ENCODE measurements at regions of chrX and their contacts with region 1.

Region 1: DNA sequence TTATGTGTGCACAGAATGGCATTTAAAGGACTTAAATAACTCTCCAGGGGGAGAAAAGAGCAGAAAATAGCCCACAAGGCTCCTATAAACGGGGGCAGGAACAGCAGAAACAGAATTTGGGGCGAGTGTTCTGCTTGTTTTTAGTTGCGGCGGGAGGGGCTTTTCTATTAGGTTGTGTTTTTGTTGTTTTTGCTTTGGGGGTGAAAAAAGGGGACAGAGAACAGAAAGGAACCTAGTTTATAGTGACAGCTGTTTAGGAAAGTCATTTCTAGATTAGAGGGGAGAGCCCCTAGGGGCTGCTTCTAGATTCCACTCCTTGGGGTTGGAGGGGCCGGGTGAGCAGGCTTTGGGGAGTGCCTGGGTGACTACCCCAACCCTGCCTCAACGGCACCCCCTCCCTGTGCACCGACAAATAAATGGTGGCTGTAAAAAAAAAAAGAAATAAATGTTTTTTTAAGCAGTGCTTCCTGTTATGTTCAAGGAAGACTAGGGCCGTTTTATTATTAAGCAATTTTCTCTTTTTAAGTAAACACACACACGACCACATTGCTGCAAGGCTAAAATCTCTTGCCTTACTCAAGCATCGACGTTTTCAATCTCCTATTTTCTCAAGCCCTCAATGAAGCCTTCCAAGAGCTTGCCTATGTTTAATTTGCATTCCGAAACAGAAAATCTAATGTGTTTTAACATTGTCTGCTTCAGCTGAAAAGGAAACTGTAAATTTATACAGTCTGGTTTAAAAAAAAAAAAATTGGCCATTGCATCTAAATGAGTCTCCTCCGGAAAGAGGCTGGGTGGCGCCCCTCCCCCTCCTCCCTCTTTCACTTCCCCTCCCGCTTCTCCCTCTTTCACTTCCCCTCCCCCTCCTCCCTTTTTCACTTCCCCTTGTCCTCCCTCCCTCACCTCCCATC is 123.3 kb upstream of the TBL1X start:
- DNase-seq: peak; percentile 30
- H3K4me3 Mint-ChIP-seq: peak overlapping the region; percentile 73
- H3K27ac Mint-ChIP-seq: peak overlapping the region; percentile 90
- H3K4me1 Mint-ChIP-seq: peaks cover 36% of the 10 kb centered on the region
- H3K27me3 Mint-ChIP-seq: peaks cover 2% of the 10 kb centered on the region

Region 2: DNA sequence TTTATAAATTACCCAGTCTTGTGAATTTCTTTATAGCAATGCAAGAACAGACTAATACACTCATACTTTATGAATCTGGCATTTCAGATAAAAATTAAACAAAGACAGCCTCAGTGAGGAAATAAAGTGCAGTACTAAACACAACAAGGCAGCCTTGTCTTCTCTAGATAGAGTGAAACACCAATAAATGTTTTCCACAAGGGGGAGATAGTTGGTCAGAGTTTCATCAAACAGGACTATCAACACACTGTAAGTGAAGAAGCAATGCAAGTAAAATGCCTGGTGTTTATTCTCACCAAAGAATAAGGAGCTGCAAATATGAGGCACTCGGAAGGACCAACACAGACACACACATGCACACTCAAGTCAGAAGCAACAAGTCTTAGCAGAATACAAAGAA is 370.4 kb before region 1 on chrX:
- intact Hi-C with region 1: loop called (anchors 10 kb)
- DNase-seq: no peak
- H3K4me3 Mint-ChIP-seq: no peak overlapping the region
- H3K27ac Mint-ChIP-seq: no peak overlapping the region
- H3K4me1 Mint-ChIP-seq: peaks cover 6% of the 10 kb centered on the region
- H3K27me3 Mint-ChIP-seq: peaks cover 2% of the 10 kb centered on the region

Region 3: DNA sequence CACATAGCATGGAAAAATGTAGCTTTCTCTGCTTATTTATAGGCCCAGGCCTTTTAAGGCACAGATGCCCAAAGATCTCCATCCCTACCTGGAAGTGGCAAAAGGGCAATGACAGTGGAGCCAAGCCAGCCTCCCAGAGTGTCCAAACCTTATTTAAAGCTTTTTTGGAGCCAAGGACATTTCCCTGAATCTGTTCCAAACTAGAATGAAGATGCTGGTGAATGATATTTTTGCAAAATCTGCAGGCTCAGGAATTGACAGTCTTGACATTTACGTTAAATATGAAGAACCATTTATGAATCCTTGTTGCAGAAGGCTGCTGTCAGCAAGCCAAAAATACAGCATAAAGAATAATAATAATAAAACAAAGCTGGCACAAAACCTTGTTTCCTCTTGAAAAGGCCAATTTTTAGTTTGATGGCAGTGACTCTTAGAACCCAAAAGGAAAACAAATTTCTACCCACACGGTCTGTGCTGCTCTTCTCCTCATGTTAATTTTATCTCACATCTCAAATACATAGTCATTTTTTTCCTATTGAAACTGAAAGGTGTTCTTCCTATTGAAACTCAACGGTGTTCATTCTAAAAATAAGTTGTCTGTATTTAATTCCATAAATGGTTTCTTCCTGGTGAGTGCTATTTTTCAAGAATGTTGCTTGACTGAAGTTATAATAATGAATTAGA is 83.0 kb before region 1 on chrX:
- intact Hi-C with region 1: loop called (anchors 1 kb)
- DNase-seq: no peak
- H3K4me3 Mint-ChIP-seq: no peak overlapping the region
- H3K27ac Mint-ChIP-seq: peak overlapping the region; percentile 36
- H3K4me1 Mint-ChIP-seq: peaks cover 26% of the 10 kb centered on the region
- H3K27me3 Mint-ChIP-seq: no peaks in the 10 kb centered on the region

Region 4: DNA sequence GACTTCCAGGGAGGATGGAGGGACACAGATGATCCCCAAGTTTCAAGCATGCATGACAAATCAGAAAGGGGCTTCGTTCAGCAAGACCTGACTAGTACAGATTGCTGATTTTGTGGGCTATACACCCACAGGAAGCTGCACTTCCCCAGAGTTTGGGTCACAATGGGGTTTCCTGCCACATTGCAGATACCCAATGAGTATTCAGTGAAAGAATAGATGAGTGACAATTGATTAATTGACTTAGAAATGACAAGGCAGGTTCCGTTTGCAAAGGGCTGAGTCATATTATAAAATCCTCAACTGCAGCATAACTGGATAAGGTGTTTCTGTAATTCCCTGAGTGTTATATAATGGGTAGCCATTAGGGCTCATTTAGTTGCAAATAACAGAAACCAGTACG is 23.3 kb before region 1 on chrX:
- intact Hi-C with region 1: loop called (anchors 1 kb)
- DNase-seq: peak; percentile 3
- H3K4me3 Mint-ChIP-seq: no peak overlapping the region
- H3K27ac Mint-ChIP-seq: no peak overlapping the region
- H3K4me1 Mint-ChIP-seq: peaks cover 14% of the 10 kb centered on the region
- H3K27me3 Mint-ChIP-seq: no peaks in the 10 kb centered on the region

Region 5: DNA sequence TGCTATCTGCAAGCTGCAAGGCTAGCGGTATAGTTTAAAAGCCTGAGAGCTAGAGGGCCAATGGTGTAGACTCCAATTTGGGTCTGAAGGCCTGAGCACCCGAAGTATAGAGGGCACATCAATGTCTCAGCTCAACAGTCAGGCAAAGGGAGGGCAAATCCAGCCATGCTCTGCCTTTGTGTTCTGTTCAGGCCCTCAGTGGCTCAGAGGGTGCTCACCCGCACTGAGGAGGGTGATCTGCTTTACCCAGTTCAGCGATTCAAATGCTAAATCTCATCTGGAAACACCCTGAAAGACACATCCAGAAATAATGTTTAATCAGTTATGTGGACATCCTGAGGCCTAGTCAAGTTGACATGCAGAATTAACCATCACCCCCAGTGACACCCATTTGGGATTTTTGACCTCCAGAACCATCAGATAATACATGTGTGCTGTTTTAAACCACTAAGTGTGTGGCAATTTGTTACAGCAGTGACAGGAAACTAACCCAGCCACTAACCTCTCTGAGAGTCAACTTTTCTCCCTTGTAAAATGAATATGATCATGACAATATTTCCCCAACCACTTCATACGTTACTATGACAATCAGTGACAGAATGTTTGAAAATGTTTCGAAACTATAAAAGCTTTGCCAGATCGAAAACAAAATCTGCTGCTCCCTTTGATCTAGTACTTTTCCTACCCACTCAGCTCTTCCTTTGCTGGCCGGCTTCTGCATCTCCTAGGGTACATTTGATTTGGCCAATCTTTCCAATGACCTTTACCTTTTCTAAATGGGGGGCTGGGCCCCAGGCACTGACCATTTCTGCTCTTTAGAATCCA is 114.9 kb after region 1 on chrX:
- intact Hi-C with region 1: loop called (anchors 1 kb)
- DNase-seq: peak; percentile 26
- H3K4me3 Mint-ChIP-seq: peak overlapping the region; percentile 23
- H3K27ac Mint-ChIP-seq: peak overlapping the region; percentile 91
- H3K4me1 Mint-ChIP-seq: peaks cover 27% of the 10 kb centered on the region
- H3K27me3 Mint-ChIP-seq: no peaks in the 10 kb centered on the region

Region 6: GRCh38 chrX:9708904-9709553 is 367.5 kb after region 1 on chrX:
- intact Hi-C with region 1: loop called (anchors 10 kb)
- DNase-seq: peak; percentile 62
- H3K4me3 Mint-ChIP-seq: no peak overlapping the region
- H3K27ac Mint-ChIP-seq: no peak overlapping the region
- H3K4me1 Mint-ChIP-seq: peaks cover 8% of the 10 kb centered on the region
- H3K27me3 Mint-ChIP-seq: no peaks in the 10 kb centered on the region